Activated T-helper 1 cell treated with anti-CD3 and anti-CD28 coated beads, Interleukin-12 subunit alpha, Interleukin-12 subunit beta, Interleukin-2, Interleukin-4 antibody, amounts not matched to agents 30 ng/mL and 10 ng/mL and 1 ng/mL, durations not matched to agents 14 hours and 24 hours and 36 hours (primary cell): ENCODE measurements at regions of chr2 and their contacts with region 1.

Region 1: DNA sequence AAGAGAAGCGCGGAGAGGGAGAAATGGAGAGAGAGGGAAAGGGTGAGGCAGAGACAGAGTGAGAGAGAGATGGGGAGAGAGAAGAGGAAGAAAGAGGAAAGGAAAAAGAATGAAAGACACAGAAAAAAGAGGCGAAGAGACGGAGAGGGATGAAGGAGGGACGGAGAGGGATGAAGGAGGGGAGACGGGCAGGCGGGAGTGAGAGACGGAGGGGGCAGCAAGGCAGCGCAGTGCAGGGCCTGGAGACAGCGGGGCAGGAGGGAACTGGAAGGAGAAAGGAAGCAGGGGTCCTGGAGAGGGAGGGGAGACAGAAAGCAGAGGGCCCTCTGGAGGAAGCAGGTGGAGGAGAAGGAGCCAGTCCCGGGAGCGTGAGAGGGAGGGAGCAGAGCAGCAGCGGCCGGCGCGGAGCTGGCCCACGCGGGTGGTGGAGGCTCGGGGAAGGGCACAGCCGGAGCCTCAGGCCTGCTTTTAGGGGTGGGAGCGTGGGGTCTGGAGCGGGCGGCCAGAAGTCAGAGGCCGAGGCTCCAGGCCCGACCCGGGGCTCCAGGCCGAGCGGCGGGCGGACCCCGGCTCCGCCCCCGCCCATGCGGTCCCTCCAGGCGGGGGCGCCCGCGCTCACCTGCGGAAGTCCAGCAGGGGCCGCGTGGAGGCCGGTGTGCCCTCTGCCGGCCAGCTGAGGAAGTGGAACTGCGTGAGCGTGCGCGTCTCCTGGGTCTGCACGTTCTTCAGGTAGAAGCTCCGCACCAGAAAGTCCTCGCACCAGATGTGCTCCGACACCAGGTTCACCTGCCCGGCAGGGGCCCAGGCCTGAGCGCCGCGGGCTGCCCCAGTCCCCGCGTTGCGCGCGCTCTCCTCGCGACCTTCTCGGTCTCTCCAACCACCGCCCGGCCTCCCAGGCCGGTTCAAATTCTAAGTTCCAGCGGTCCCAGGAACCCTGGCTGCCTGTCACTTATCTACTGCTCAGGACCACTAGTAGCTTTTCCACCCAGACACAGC is 14.5 kb downstream of the PTPRN start:
- DNase-seq: peak; percentile 87
- H3K4me3 Mint-ChIP-seq: peak overlapping the region; percentile 80
- H3K27ac Mint-ChIP-seq: peak overlapping the region; percentile 87
- H3K4me1 Mint-ChIP-seq: peaks cover 14% of the 10 kb centered on the region
- H3K27me3 Mint-ChIP-seq: peaks cover 17% of the 10 kb centered on the region

Region 2: DNA sequence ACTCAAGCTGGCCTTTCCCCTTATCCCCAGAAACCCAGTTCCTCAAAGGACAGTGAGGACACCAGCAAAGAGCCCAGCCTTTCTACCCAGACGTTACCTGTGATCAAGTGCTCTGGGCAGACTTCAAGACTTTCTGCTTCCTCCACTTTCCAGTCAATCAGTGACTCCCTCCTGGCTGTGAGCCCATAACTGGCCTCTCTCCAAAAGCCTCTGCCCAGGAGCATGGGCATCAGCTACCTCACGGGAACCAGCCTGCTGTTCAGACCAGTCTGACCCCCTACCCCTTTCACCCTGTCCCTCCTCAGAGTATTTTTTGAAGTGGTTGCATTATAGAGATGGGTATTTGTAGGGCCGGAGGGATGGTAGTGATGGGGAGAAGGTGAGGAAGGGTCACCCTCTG is 540.5 kb before region 1 on chr2:
- intact Hi-C with region 1: no loop called
- DNase-seq: no peak
- H3K4me3 Mint-ChIP-seq: no peak overlapping the region
- H3K27ac Mint-ChIP-seq: no peak overlapping the region
- H3K4me1 Mint-ChIP-seq: no peaks in the 10 kb centered on the region
- H3K27me3 Mint-ChIP-seq: no peaks in the 10 kb centered on the region

Region 3: GRCh38 chr2:219057709-219058540 is 236.7 kb before region 1 on chr2:
- intact Hi-C with region 1: loop called (anchors 2 kb)
- DNase-seq: peak; percentile 68
- H3K4me3 Mint-ChIP-seq: peak overlapping the region; percentile 30
- H3K27ac Mint-ChIP-seq: no peak overlapping the region
- H3K4me1 Mint-ChIP-seq: no peaks in the 10 kb centered on the region
- H3K27me3 Mint-ChIP-seq: peaks cover 60% of the 10 kb centered on the region

Region 4: DNA sequence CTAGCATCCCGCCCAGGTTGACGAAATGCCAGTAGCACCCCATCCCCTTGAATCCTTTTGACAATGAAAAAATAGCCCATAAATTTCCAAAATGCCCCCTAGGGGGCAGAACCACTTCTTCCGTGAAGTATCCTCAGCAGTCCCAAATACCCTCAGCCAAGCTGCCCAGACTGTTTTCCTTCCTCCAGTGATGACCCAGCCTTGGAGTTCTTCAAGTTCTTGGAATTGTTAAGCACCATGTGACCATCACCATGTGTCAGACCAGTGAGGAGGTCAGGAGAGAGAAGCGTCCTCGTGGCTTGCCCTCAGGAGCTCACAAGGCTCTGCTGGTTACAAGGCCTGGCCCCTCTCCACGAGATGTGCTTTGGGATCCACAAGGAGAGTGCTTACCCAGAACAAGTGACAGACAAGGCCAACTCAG is 123.4 kb before region 1 on chr2:
- intact Hi-C with region 1: loop called (anchors 1 kb)
- DNase-seq: no peak
- H3K4me3 Mint-ChIP-seq: peak overlapping the region; percentile 16
- H3K27ac Mint-ChIP-seq: peak overlapping the region; percentile 53
- H3K4me1 Mint-ChIP-seq: peaks cover 30% of the 10 kb centered on the region
- H3K27me3 Mint-ChIP-seq: no peaks in the 10 kb centered on the region

Region 5: DNA sequence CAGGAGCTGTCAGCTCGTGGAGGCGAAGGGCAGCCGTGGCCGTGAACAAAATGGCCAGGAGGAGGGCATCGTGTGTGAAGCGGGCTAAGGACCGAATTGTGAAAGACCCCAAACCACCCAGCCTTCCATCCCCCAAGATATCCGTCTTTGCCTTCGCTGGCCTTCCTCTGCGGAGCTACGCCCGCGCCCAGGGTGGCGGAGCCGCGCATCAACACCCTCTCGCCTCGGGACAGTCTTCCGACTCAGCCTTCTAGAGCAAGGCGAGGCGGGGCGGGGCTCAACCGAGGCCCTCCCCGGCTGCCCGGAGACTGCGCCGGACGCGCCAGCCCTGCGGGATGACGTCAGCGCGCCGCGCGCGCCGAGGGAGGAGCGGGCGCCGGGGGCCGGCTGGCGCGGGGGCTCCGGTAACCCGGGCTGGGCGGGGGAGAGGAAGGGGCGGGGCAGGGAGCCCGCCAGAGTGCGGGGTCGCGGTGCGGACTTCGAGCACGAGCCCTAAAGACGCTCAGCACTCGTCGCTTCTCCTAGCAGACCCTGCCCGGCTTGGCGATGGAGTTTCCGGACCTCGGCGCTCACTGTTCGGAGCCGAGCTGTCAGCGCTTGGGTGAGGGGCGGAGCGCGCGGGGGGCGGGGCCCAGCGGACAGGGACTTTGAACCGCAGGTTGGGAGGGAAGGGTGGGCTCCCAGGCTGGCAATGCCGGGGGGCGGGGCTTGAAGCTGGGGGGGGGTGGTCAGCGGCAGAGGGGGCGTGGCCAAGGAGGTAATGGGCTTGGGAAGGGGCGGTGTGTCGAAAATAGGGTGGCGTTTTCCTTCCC is 88.0 kb before region 1 on chr2 and contains the start of gene ZFAND2B:
- intact Hi-C with region 1: loop called (anchors 1 kb)
- DNase-seq: peak; percentile 96
- H3K4me3 Mint-ChIP-seq: peak within 1 kb of the TSS; percentile 92
- H3K27ac Mint-ChIP-seq: peak within 1 kb of the TSS; percentile 99
- H3K4me1 Mint-ChIP-seq: peaks cover 40% of the 10 kb centered on the region
- H3K27me3 Mint-ChIP-seq: no peaks in the 10 kb centered on the region
- total RNA-seq, gene ZFAND2B: 35.0 and 41.3 TPM in 2 replicates

Region 6: GRCh38 chr2:219229305-219230058 is 65.2 kb before region 1 on chr2 and contains the starts of genes ANKZF1 and ATG9A:
- intact Hi-C with region 1: loop called (anchors 1 kb)
- DNase-seq: peak; percentile 98
- H3K4me3 Mint-ChIP-seq: peak within 1 kb of the TSS; percentile 97
- H3K27ac Mint-ChIP-seq: peak within 1 kb of the TSS; percentile 99
- H3K4me1 Mint-ChIP-seq: peaks cover 47% of the 10 kb centered on the region
- H3K27me3 Mint-ChIP-seq: no peaks in the 10 kb centered on the region
- total RNA-seq, gene ANKZF1: 112 and 117 TPM in 2 replicates
- total RNA-seq, gene ATG9A: 55.3 and 57.0 TPM in 2 replicates

Region 7: GRCh38 chr2:219253753-219254590 is 40.7 kb before region 1 on chr2 and contains the start of gene TUBA4A:
- intact Hi-C with region 1: loop called (anchors 1 kb)
- DNase-seq: peak; percentile 87
- H3K4me3 Mint-ChIP-seq: peak within 1 kb of the TSS; percentile 93
- H3K27ac Mint-ChIP-seq: peak within 1 kb of the TSS; percentile 98
- H3K4me1 Mint-ChIP-seq: peaks cover 50% of the 10 kb centered on the region
- H3K27me3 Mint-ChIP-seq: no peaks in the 10 kb centered on the region
- total RNA-seq, gene TUBA4A: 211 and 217 TPM in 2 replicates

Region 8: DNA sequence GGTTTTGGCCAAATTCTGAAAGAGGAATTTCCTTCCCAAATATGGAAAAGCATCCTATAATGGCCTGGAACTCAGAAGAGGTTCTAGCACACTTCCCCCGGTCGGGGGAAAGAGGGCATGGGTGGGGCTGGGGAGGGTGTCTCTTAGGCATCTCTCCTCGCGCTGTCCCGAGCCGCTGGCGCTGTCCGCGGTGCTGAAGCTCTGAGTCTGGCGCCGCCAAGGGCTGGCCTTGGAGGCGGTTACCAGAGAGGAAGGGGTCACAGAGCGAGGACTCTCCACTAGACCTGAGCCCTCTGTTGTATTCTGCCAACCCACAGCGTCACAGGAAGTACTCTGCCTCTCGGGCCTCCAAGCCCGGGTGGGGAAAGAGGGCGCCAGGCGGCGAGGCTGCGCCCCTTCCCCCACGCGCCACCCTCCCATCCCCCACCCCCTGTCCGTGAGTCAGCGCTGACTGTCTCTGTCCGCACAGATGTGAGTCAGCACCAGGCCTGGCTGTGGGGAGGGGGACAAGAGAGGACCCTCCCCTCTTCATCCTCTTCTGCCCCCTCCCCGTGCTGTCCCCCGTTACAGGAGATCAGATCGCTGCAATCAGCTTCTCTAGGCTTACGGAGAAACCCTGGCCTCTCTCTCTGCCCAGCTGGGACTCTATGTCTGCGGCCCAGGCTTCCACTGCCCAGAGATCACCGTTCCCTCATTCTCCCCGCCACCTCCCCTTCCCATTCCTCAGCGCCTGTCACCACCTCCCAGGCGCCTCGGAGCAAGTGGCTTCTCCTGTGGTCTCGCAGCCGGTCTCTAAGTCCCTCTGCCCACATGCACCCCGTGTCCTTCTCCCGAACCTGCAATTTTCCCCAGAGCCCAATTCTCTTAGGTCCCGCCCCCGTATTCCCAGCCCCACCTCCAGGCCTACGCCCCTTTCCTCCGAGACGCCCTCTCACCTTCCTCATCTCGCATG is 13.8 kb after region 1 on chr2:
- intact Hi-C with region 1: loop called (anchors 1 kb)
- DNase-seq: peak; percentile 63
- H3K4me3 Mint-ChIP-seq: no peak overlapping the region
- H3K27ac Mint-ChIP-seq: peak overlapping the region; percentile 50
- H3K4me1 Mint-ChIP-seq: no peaks in the 10 kb centered on the region
- H3K27me3 Mint-ChIP-seq: peaks cover 47% of the 10 kb centered on the region